Activated naive CD4-positive, alpha-beta T cell treated with anti-CD3 and anti-CD28 coated beads for 36 hours (primary cell): ENCODE measurements at regions of chr2 and their contacts with region 1.

Region 1: GRCh38 chr2:102520028-102520427 is 47.0 kb downstream of the SLC9A4 start:
- DNase-seq: peak; percentile 42
- H3K4me3 Mint-ChIP-seq: no peak overlapping the region
- H3K27ac Mint-ChIP-seq: no peak overlapping the region
- H3K4me1 Mint-ChIP-seq: no peaks in the 10 kb centered on the region
- H3K27me3 Mint-ChIP-seq: peaks cover 2% of the 10 kb centered on the region

Region 2: GRCh38 chr2:102122110-102122509 is 397.9 kb before region 1 on chr2:
- CTCF ChIA-PET with region 1: no interaction called
- intact Hi-C with region 1: no loop called
- DNase-seq: no peak
- H3K4me3 Mint-ChIP-seq: no peak overlapping the region
- H3K27ac Mint-ChIP-seq: no peak overlapping the region
- H3K4me1 Mint-ChIP-seq: peaks cover 16% of the 10 kb centered on the region
- H3K27me3 Mint-ChIP-seq: peaks cover 2% of the 10 kb centered on the region

Region 3: DNA sequence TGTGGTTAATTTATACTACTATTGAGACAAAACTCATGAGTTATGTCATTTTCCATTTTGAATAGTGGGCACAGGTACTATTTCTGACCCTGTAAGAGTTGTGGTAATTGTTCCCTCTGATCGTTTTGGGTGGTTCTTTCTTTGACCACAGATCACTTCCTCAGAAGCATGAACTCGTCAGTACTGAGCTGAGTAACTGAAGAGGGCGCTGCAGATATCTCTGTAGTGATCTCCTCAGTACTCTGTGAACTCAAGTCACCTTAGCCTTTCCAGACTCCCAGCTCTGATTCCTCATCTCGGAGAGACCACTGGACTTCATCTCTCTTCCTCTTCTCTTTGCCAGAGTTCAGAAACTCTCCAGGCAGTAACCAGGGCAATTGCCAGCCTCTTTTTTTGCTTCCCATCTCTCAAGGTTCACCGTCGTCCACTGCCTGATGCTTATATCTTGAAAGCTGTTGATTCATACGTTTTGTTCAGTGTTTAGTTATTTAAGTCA is 218.1 kb before region 1 on chr2:
- CTCF ChIA-PET with region 1: no interaction called
- intact Hi-C with region 1: no loop called
- DNase-seq: peak; percentile 76
- H3K4me3 Mint-ChIP-seq: no peak overlapping the region
- H3K27ac Mint-ChIP-seq: no peak overlapping the region
- H3K4me1 Mint-ChIP-seq: peaks cover 35% of the 10 kb centered on the region
- H3K27me3 Mint-ChIP-seq: no peaks in the 10 kb centered on the region

Region 4: DNA sequence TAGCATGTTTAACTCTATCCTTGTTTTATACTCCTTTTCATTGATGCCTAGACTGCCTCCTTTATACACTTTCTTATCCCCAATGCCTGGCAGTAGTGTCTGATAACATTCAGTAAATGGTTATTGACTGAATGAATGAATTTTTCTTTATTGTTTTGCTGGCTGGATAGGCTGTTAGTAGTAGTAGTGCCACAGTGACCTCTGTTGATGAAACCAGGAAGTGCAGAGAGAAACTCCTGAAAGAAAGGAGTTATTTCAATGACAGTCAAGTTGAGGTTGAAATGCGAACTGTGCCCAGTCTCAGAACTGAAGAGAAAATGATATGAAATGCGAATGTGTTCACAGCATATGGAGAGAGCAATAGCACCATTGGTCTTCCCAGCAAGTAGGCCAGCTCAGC is 72.6 kb after region 1 on chr2:
- CTCF ChIA-PET with region 1: interaction called, 4 read pairs
- intact Hi-C with region 1: loop called (anchors 1 kb)
- DNase-seq: peak; percentile 55
- H3K4me3 Mint-ChIP-seq: no peak overlapping the region
- H3K27ac Mint-ChIP-seq: no peak overlapping the region
- H3K4me1 Mint-ChIP-seq: no peaks in the 10 kb centered on the region
- H3K27me3 Mint-ChIP-seq: peaks cover 13% of the 10 kb centered on the region

Region 5: GRCh38 chr2:102615622-102616436 is 95.8 kb after region 1 on chr2:
- CTCF ChIA-PET with region 1: interaction called, 12 read pairs
- intact Hi-C with region 1: loop called (anchors 1 kb)
- DNase-seq: peak; percentile 72
- H3K4me3 Mint-ChIP-seq: no peak overlapping the region
- H3K27ac Mint-ChIP-seq: no peak overlapping the region
- H3K4me1 Mint-ChIP-seq: peaks cover 12% of the 10 kb centered on the region
- H3K27me3 Mint-ChIP-seq: peaks cover 41% of the 10 kb centered on the region

Region 6: DNA sequence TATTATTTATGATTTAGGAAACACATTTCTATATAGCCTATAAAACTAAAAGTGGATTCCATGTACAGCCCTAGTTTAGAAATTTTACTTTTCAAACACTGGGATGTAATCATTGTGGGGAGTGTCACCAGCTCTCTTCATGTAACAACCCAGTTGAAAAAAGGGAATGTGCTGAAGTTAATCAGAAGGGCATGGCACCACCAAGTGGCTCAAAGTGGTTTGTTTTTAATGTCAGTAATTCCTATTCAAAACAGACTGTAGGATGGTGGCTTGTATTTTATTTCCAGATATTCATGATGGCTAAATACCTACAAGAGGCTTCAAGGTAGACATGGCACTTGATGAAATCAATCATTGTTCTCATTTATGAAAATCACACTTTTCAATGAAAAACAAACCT is 183.7 kb after region 1 on chr2:
- CTCF ChIA-PET with region 1: no interaction called
- intact Hi-C with region 1: loop called (anchors 1 kb)
- DNase-seq: peak; percentile 58
- H3K4me3 Mint-ChIP-seq: no peak overlapping the region
- H3K27ac Mint-ChIP-seq: no peak overlapping the region
- H3K4me1 Mint-ChIP-seq: no peaks in the 10 kb centered on the region
- H3K27me3 Mint-ChIP-seq: peaks cover 5% of the 10 kb centered on the region

Region 7: DNA sequence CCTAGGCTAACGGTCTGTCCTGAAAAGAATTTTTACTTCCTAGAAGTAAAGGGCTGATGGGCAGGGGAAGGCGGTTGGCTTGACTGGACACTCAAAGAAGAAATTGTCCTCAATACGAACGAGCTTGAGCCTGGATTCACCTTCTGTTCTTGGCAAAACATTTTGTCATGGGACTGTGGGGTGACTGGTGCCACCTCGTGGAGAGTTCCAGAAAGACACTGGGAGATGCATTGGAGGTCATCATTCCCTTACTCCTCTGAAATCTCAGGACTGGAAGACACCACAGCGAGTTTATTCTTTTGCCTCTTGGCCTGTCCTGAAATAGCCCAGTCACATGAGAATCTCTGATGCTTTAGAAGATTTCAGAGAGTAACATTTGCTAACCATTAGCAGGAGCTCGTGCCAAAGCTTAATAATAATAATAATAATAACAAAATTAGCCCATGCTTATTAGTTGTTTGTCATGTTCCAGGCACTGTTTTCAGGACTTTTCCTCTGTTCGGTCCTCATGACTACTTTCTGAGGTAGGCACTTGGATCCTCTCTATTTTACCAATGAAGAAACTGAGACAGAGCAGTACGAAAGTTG is 286.3 kb after region 1 on chr2:
- CTCF ChIA-PET with region 1: interaction called, 3 read pairs
- intact Hi-C with region 1: loop called (anchors 1 kb)
- DNase-seq: peak; percentile 60
- H3K4me3 Mint-ChIP-seq: no peak overlapping the region
- H3K27ac Mint-ChIP-seq: no peak overlapping the region
- H3K4me1 Mint-ChIP-seq: peaks cover 14% of the 10 kb centered on the region
- H3K27me3 Mint-ChIP-seq: no peaks in the 10 kb centered on the region